MCF 10A (cell line): ENCODE measurements at regions of chr5 and their contacts with region 1.

Region 1: DNA sequence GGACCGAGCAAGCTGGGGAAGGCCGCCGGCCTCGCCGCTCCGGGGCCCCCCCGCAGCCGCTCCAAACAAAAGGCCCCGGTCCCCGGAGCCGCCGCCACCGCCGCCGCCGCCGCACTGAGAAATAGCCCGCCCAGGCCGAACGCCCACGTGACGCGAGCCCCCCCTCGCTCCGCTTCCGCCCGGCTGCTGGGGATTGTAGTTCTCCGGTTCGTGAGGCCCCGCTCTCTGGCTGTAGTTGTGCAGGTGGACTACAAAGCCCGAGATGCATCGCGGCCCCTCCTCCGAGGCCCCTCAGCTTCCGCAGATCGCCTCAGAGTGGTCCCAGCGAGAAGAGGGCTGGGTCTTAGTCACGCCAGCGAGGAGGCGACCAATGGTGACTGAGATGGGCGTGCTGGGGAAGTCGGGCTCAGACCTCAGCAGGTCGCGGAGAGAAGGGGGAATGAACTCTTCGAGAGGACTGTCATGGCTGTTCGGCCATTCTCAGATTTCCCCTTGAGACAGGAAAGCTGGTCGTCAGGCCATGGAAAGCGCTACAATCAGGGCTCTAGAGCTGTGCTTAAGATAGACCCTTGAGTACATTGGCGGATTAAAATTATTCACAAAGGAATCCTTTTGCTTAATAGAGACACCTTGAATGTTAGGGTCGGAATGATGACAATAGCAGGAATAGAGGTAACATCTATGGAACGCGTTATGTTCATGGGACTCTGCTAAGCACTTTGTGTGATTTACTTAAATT is 489 bp upstream of the PANK3 start:
- DNase-seq: peak; percentile 100
- H3K4me3 Mint-ChIP-seq: peak overlapping the region; percentile 83
- H3K27ac Mint-ChIP-seq: peak overlapping the region; percentile 96
- H3K4me1 Mint-ChIP-seq: peaks cover 28% of the 10 kb centered on the region
- H3K27me3 Mint-ChIP-seq: no peaks in the 10 kb centered on the region
- CTCF ChIP-seq: no peak

Region 2: GRCh38 chr5:168305281-168305680 is 274.4 kb before region 1 on chr5:
- CTCF ChIA-PET with region 1: no interaction called
- POLR2A ChIA-PET with region 1: no interaction called
- intact Hi-C with region 1: no loop called
- DNase-seq: no peak
- H3K4me3 Mint-ChIP-seq: no peak overlapping the region
- H3K27ac Mint-ChIP-seq: no peak overlapping the region
- H3K4me1 Mint-ChIP-seq: peaks cover 36% of the 10 kb centered on the region
- H3K27me3 Mint-ChIP-seq: no peaks in the 10 kb centered on the region
- CTCF ChIP-seq: no peak

Region 3: GRCh38 chr5:168486136-168486879 is 93.3 kb before region 1 on chr5 and contains the start of gene RARS1:
- CTCF ChIA-PET with region 1: interaction called, 4 read pairs
- POLR2A ChIA-PET with region 1: interaction called, 12 read pairs
- intact Hi-C with region 1: loop called (anchors 1 kb)
- DNase-seq: peak; percentile 96
- H3K4me3 Mint-ChIP-seq: peak within 1 kb of the TSS; percentile 95
- H3K27ac Mint-ChIP-seq: peak within 1 kb of the TSS; percentile 87
- H3K4me1 Mint-ChIP-seq: peaks cover 19% of the 10 kb centered on the region
- H3K27me3 Mint-ChIP-seq: no peaks in the 10 kb centered on the region
- CTCF ChIP-seq: peak; percentile 97
- total RNA-seq, gene RARS1: 120 and 127 TPM in 2 replicates

Region 4: DNA sequence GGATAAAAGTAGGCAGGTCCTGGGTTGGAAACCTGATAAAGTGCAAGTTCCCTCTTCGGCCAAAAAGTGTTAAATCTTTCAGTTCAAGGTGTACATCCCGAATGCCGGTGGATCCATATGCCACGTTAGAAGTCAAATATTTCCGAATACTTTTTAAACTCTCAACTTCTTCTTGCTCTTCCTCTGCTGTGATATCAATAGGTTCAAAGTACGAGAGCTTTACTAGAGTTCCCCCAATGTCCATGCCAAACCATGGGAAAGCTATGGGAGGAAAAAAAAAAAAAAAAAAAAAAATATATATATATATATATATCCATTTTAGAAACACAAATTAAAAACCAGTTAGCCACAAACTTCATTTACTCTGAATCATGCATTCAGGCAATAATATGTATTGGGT is 10.9 kb before region 1 on chr5:
- CTCF ChIA-PET with region 1: no interaction called
- POLR2A ChIA-PET with region 1: interaction called, 18 read pairs
- intact Hi-C with region 1: no loop called
- DNase-seq: no peak
- H3K4me3 Mint-ChIP-seq: no peak overlapping the region
- H3K27ac Mint-ChIP-seq: no peak overlapping the region
- H3K4me1 Mint-ChIP-seq: peaks cover 29% of the 10 kb centered on the region
- H3K27me3 Mint-ChIP-seq: no peaks in the 10 kb centered on the region
- CTCF ChIP-seq: no peak

Region 5: DNA sequence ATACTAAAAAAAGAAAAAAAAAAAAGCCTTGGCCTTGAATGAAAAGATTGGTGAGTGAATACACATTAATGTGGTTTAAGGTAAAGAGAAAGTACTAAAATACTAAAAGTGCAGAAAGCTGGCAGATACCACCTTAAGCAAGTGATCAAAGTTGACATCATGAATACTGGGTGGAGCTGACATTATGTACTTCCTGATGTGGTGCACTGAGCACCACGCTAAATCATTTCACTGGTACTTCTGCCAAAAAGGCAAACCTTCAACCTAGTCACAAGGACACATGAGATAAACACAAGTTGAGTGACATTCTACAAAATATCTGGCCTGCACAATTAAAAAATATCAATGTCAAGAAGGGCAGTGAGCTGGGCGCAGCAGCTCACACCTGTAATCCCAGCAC is 33.3 kb after region 1 on chr5:
- CTCF ChIA-PET with region 1: interaction called, 3 read pairs
- POLR2A ChIA-PET with region 1: interaction called, 14 read pairs
- intact Hi-C with region 1: no loop called
- DNase-seq: no peak
- H3K4me3 Mint-ChIP-seq: no peak overlapping the region
- H3K27ac Mint-ChIP-seq: no peak overlapping the region
- H3K4me1 Mint-ChIP-seq: peaks cover 7% of the 10 kb centered on the region
- H3K27me3 Mint-ChIP-seq: no peaks in the 10 kb centered on the region
- CTCF ChIP-seq: no peak

Region 6: GRCh38 chr5:168647083-168647482 is 67.4 kb after region 1 on chr5:
- CTCF ChIA-PET with region 1: interaction called, 10 read pairs
- POLR2A ChIA-PET with region 1: interaction called, 101 read pairs
- intact Hi-C with region 1: loop called (anchors 1 kb)
- DNase-seq: peak; percentile 99
- H3K4me3 Mint-ChIP-seq: peak overlapping the region; percentile 25
- H3K27ac Mint-ChIP-seq: peak overlapping the region; percentile 93
- H3K4me1 Mint-ChIP-seq: peaks cover 44% of the 10 kb centered on the region
- H3K27me3 Mint-ChIP-seq: no peaks in the 10 kb centered on the region
- CTCF ChIP-seq: no peak